K562 (cell line): ENCODE measurements at regions of chr2 and their contacts with region 1.

Region 1: DNA sequence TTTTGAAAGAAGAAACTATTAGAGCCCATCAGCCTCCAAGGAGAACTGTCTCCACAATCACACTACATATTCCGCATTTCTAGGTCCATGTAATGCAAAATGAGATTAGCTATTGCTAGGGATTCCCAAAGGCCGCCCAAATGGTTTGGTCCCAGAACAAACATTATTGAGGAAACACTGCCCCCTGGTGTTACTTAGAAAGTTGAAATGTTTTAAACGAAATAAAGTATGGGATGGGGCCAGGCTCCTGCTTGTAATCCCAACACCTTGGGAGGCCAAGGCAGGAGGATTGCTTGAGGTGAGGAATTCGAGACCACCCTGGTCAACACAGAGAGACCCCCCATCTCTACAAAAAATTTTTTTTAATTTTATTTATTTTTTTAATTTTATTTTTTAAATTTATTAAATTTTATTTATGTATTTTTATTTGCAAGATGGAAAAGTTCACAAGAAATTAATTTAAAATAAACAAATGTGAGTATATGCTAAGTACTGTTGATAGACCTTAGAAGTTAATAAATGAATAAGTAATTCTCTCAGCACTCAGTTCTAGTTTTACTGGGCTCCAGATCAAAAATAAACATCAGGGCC is 5.5 kb downstream of the NHEJ1 start:
- DNase-seq: peak; percentile 39 to 81 (median 46)
- ATAC-seq: peak; percentile 82
- H3K4me3 ChIP-seq: no peak overlapping the region
- H3K27ac ChIP-seq: no peak overlapping the region
- H3K4me1 ChIP-seq: peaks cover 3 to 6% of the 10 kb centered on the region in 2 experiments; a peak in 3 of 5 replicates
- H3K27me3 ChIP-seq: no peaks in the 10 kb centered on the region
- CTCF ChIP-seq: peak; percentile 37 to 67 (median 59); a peak in 4 of 6 replicates
- EP300 ChIP-seq: no peak
- POLR2A ChIP-seq: no peak
- RAD21 ChIP-seq: peak; percentile 80 to 84

Region 2: DNA sequence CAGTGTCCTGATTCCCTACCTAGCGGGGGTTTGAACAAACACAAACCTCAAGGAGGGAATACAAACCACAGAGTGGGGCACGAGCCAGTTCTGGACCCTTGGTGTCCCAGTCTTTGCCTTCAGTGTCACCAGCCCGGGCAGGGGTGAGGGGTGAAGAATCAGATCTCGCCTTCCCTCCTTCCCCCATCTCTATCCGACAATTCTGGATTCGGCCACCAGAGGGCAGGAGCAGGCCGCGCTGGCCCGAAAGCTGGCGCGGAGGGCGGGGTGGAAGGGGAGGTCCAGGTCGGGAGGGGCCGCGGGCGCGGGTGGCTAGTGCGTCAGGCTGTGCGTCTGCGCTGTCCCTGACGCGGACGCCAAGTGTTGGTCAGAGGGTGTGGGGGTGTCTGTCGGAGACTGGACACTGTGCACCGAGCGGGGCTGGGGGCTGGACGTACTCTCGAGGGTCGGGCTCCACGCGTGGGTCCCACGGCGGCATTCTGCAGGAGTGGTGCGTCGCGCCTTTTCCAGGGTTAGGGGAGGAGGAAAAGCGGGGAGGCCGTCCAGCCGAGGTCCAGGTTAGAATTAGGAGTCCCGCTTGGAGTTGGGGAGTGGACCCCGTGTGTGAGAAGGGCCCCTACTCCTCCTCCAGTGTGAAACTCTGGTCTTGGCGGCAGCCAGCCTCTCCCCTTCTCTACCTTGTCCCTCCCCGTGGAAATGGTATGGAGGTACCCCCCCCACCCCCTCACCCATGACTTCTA is 159.0 kb before region 1 on chr2:
- CTCF ChIA-PET with region 1: interaction called, 11 read pairs
- POLR2A ChIA-PET with region 1: no interaction called
- in situ Hi-C with region 1: no loop called
- intact Hi-C with region 1: loop called (anchors 1 kb)
- DNase-seq: peak; percentile 89 to 92 (median 91)
- ATAC-seq: peak; percentile 97
- H3K4me3 ChIP-seq: peak overlapping the region; percentile 51
- H3K27ac ChIP-seq: peak overlapping the region; percentile 33; the same call in 2 of the 3 replicates
- H3K4me1 ChIP-seq: peaks cover 12 to 33% of the 10 kb centered on the region in 2 experiments; a peak in 4 of 5 replicates
- H3K27me3 ChIP-seq: peaks cover 0 to 36% of the 10 kb centered on the region in 2 experiments; a peak in 3 of 5 replicates
- CTCF ChIP-seq: peak; percentile 81 to 89 (median 84)
- EP300 ChIP-seq: no peak
- POLR2A ChIP-seq: peak; percentile 64
- RAD21 ChIP-seq: peak; percentile 62 to 71

Region 3: DNA sequence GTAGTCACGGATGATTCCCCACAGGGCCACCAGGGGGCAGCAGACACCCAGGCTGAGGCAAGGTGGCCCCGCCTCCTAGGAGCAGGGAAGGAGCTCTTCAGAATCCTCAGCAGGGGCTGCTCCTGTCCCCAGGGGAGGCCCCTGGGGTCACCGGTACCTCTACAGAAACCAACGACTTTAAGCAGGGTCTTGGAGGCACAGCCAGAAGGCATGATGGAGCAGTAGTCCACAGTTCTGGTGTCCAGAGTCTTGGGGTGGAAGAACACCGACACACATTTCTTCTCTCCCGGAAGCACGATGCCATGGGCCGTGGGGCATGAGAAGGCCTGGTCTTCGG is 125.4 kb before region 1 on chr2:
- CTCF ChIA-PET with region 1: interaction called, 31 read pairs
- POLR2A ChIA-PET with region 1: no interaction called
- in situ Hi-C with region 1: loop called (anchors 10 kb)
- intact Hi-C with region 1: loop called (anchors 2 kb)
- DNase-seq: peak; percentile 74 to 84 (median 80)
- ATAC-seq: peak; percentile 97
- H3K4me3 ChIP-seq: no peak overlapping the region
- H3K27ac ChIP-seq: no peak overlapping the region
- H3K4me1 ChIP-seq: peaks cover 0 to 4% of the 10 kb centered on the region in 2 experiments; a peak in 1 of 5 replicates
- H3K27me3 ChIP-seq: peaks cover 5 to 58% of the 10 kb centered on the region in 2 experiments; a peak in 3 of 5 replicates
- CTCF ChIP-seq: peak; percentile 85 to 87 (median 86)
- EP300 ChIP-seq: no peak
- POLR2A ChIP-seq: no peak
- RAD21 ChIP-seq: peak; percentile 63 to 83

Region 4: GRCh38 chr2:219057709-219058540 is 97.2 kb before region 1 on chr2:
- CTCF ChIA-PET with region 1: interaction called, 17 read pairs
- POLR2A ChIA-PET with region 1: no interaction called
- in situ Hi-C with region 1: loop called (anchors 5 kb)
- intact Hi-C with region 1: loop called (anchors 1 kb)
- DNase-seq: peak; percentile 69 to 78 (median 74)
- ATAC-seq: peak; percentile 98
- H3K4me3 ChIP-seq: no peak overlapping the region
- H3K27ac ChIP-seq: no peak overlapping the region
- H3K4me1 ChIP-seq: peaks cover 0 to 25% of the 10 kb centered on the region in 2 experiments; a peak in 2 of 5 replicates
- H3K27me3 ChIP-seq: peaks cover 14 to 57% of the 10 kb centered on the region in 2 experiments; a peak in 4 of 5 replicates
- CTCF ChIP-seq: peak; percentile 75 to 89 (median 78)
- EP300 ChIP-seq: no peak
- POLR2A ChIP-seq: no peak
- RAD21 ChIP-seq: peak; percentile 81 to 86

Region 5: DNA sequence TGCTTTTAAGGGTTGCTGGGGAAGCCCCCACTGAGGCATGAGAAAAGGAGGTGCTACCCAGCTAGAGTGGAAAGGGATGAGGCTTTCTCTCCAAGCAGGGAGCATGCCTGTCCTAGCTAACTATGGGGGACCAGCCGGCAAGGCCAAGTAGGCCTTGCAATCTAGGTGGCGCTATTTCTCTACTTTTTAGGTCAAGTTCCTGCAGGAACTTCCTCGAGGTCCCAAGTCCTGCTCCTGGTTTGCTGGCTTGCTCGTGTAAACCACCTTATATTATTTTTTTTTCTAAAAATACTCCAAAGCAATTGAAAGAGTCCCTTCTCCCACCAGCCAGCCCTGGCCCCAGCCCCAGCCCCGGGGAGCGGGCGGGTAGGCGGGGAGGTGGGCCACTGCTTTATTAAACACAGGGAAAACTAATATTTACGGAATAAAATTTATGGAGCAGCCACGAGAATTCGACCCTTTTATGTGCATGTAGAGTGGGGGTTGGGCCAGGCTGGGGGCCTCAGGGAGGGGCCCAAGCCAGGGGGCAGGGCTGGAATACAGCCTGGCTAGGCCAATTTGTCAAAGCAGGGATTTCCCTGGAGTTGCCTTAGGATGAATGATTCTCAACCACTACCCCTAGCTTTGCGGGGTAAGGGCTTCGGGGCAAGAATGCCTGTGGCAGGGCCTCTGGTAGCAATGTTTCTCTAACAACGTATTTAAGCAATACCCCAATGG is 81.6 kb before region 1 on chr2:
- CTCF ChIA-PET with region 1: no interaction called
- POLR2A ChIA-PET with region 1: no interaction called
- in situ Hi-C with region 1: no loop called
- intact Hi-C with region 1: loop called (anchors 1 kb)
- DNase-seq: peak; percentile 27 to 74 (median 47)
- ATAC-seq: peak; percentile 86
- H3K4me3 ChIP-seq: no peak overlapping the region
- H3K27ac ChIP-seq: no peak overlapping the region
- H3K4me1 ChIP-seq: no peaks in the 10 kb centered on the region
- H3K27me3 ChIP-seq: no peaks in the 10 kb centered on the region
- CTCF ChIP-seq: peak; percentile 68 to 75 (median 70); a peak in 5 of 6 replicates
- EP300 ChIP-seq: no peak
- POLR2A ChIP-seq: no peak
- RAD21 ChIP-seq: peak; percentile 47 to 68

Region 6: DNA sequence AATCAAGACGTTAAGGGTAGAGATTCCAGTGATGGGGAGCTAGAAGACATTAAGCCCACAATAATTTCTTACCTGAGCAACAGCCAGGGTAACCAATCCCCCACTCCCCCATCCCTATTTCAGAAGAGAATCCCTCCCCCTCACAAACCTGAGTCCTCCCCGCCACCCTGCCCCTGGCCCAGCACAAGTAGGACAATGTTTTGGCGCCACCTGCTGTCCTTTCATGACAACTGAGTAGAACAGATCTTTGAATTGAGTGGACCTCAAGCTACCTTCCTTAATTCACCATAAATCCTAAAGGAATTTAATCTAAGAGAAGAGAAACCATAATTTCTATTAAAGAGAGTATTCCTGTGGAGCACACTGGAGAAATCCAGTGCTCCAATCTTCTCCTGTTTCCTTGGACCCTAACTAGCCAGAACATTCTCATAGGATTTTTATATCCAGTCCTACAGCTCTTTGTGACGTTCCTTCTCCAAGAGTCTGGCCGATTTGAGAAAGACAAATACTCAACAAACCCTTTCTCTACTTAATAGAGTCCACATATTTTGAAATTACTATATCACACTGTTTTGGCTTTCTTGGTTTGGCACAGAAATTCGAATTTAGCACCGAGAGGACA is 35.6 kb before region 1 on chr2:
- CTCF ChIA-PET with region 1: no interaction called
- POLR2A ChIA-PET with region 1: no interaction called
- in situ Hi-C with region 1: no loop called
- intact Hi-C with region 1: loop called (anchors 1 kb)
- DNase-seq: peak; percentile 50 to 75 (median 54)
- ATAC-seq: peak; percentile 91
- H3K4me3 ChIP-seq: no peak overlapping the region
- H3K27ac ChIP-seq: no peak overlapping the region
- H3K4me1 ChIP-seq: peaks cover 4 to 8% of the 10 kb centered on the region in 2 experiments
- H3K27me3 ChIP-seq: no peaks in the 10 kb centered on the region
- CTCF ChIP-seq: peak; percentile 61 to 72 (median 66)
- EP300 ChIP-seq: no peak
- POLR2A ChIP-seq: no peak
- RAD21 ChIP-seq: peak; percentile 65 to 74